ENCODE measurements at regions of chr15 and their contacts with region 1.

Region 1: DNA sequence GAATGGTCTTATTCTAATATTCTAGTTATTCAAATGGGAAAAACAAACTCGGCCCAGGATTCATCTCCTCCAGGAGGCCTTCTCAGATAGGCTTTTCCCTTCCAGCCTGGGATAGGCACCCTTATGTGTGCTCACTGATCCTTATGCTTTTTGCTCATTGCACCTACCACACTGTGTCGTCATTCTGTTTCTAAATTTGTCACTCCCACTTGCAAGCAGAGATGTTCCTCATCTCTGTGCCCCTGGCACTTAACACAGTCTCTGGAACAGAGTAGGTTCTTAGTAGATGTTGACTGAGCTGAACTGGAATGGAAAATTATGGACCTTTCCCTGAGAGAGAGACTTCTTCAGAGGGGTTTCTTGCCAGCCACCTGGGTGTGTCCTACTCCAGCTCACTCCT is 18.7 kb upstream of the SPG11 start:
- DNase-seq: no peak
- ATAC-seq: peak; percentile 71
- H3K4me3 ChIP-seq: no peak overlapping the region
- H3K27ac ChIP-seq: no peak overlapping the region
- H3K4me1 ChIP-seq: peaks cover 28% of the 10 kb centered on the region
- H3K27me3 ChIP-seq: no peaks in the 10 kb centered on the region
- CTCF ChIP-seq: no peak
- EP300 ChIP-seq: no peak
- POLR2A ChIP-seq: no peak
- RAD21 ChIP-seq: no peak

Region 2: DNA sequence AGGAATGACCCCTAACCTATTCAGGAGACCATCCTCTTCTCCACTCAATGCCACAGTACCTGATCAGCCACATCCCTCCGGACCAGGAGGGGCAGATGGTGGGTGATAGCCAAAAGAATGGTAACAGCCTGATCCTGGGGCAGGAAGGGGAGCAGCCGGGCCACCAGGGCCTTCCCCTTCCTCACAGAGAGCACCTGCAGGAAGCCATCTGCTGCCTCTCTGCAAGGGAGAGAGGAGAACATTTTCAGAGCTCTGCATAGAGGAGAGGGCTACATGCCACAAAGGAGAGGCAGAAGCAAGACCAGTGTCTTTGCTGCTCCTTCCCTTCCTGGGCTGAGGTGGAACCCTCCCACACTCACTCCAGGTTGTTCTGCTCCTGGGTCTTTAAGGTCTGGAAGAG is 13.3 kb before region 1 on chr15:
- CTCF ChIA-PET with region 1: interaction called, 60 read pairs
- POLR2A ChIA-PET with region 1: interaction called, 60 read pairs
- RAD21 ChIA-PET with region 1: interaction called, 69 read pairs
- SMC1A ChIA-PET with region 1: interaction called, 73 read pairs
- in situ Hi-C with region 1: no loop called
- intact Hi-C with region 1: loop called (anchors 2 kb)
- DNase-seq: no peak
- ATAC-seq: no peak
- H3K4me3 ChIP-seq: no peak overlapping the region
- H3K27ac ChIP-seq: no peak overlapping the region
- H3K4me1 ChIP-seq: peaks cover 62% of the 10 kb centered on the region
- H3K27me3 ChIP-seq: no peaks in the 10 kb centered on the region
- CTCF ChIP-seq: no peak
- EP300 ChIP-seq: no peak
- POLR2A ChIP-seq: no peak
- RAD21 ChIP-seq: no peak